PC-3 (cell line): ENCODE measurements at regions of chr18 and their contacts with region 1.

Region 1: DNA sequence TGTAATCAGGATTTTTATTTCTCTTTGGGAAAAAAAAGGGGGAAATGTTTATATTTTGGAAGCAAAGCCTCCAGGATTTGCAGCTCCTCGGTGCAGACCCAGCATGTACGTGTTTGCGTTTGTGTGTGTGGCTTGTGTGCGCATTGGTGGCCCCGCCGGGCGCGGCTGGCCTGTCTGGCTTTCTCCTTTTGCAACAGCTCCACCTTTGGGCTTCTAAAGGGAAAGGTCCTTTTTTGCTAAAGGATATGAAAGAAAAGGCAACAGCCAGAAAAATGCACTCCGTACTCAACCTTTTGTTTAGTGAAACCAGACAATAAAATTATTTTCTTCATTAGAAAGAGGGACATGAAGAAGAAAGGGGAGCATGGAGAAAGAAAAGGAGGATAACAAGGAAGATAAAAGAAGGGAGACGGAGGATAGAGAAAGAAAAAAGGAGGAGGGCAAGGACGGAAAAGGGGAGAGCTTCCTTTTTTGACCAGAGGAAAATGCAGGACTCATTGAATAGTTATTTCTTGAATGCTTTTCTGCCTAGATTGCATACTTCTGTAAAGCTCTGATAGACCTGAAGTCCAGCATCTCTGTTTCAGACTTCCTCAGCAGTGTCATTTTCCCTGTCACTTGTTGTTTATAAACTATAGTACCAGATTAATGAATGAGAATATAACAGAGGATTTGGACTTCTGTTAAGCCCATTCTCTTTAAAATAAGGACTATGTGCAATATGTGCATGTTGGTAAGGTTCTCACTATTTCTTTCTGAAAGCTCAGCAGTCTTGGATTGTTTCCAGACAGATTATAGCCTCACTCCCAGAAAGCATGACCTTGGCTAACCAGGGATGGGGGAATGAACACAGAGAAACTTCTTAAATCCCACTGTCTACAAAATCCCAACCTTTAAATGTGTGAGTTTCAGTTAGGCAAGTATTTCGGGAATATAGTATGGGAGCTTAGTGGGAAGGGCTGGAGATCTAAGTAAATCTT is 563.1 kb upstream of the PIK3C3 start:
- DNase-seq: peak; percentile 54
- ATAC-seq: peak; percentile 47
- H3K4me3 ChIP-seq: peak overlapping the region; percentile 60
- H3K27ac ChIP-seq: no peak overlapping the region
- H3K4me1 ChIP-seq: peaks cover 27% of the 10 kb centered on the region
- H3K27me3 ChIP-seq: no peaks in the 10 kb centered on the region
- CTCF ChIP-seq: peak; percentile 67

Region 2: DNA sequence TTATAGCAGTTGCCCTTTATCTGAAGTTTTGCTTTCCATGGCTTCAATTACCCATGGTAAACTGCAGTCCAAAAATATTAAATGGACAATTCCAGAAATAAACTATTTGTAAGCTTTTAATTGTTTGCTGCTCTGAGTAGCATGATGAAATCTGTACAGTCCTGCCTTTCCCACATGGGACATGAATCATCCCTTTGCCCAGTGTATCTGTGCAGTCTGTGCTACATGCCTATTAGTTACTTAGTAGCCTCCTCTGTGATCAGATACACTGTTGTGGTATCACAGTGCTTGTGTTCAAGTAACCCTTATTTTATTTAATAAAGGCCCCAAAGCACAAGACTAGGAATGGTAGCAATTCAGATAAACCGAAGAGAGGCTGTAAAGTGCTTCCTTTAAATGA is 247.5 kb before region 1 on chr18:
- CTCF ChIA-PET with region 1: no interaction called
- POLR2A ChIA-PET with region 1: no interaction called
- intact Hi-C with region 1: no loop called
- DNase-seq: no peak
- ATAC-seq: peak; percentile 31; the same call in 1 of the 2 replicates
- H3K4me3 ChIP-seq: no peak overlapping the region
- H3K27ac ChIP-seq: no peak overlapping the region
- H3K4me1 ChIP-seq: no peaks in the 10 kb centered on the region
- H3K27me3 ChIP-seq: no peaks in the 10 kb centered on the region
- CTCF ChIP-seq: no peak

Region 3: GRCh38 chr18:41461058-41461560 is 69.2 kb after region 1 on chr18:
- CTCF ChIA-PET with region 1: interaction called, 4 read pairs
- POLR2A ChIA-PET with region 1: no interaction called
- intact Hi-C with region 1: loop called (anchors 5 kb)
- DNase-seq: peak; percentile 19
- ATAC-seq: peak; percentile 51
- H3K4me3 ChIP-seq: no peak overlapping the region
- H3K27ac ChIP-seq: no peak overlapping the region
- H3K4me1 ChIP-seq: peaks cover 32% of the 10 kb centered on the region
- H3K27me3 ChIP-seq: no peaks in the 10 kb centered on the region
- CTCF ChIP-seq: no peak

Region 4: GRCh38 chr18:41532344-41533086 is 140.6 kb after region 1 on chr18:
- CTCF ChIA-PET with region 1: interaction called, 3 read pairs
- POLR2A ChIA-PET with region 1: no interaction called
- intact Hi-C with region 1: loop called (anchors 2 kb)
- DNase-seq: peak; percentile 57
- ATAC-seq: peak; percentile 74
- H3K4me3 ChIP-seq: no peak overlapping the region
- H3K27ac ChIP-seq: no peak overlapping the region
- H3K4me1 ChIP-seq: peaks cover 12% of the 10 kb centered on the region; the same call in 1 of the 2 replicates
- H3K27me3 ChIP-seq: no peaks in the 10 kb centered on the region
- CTCF ChIP-seq: peak; percentile 53

Region 5: DNA sequence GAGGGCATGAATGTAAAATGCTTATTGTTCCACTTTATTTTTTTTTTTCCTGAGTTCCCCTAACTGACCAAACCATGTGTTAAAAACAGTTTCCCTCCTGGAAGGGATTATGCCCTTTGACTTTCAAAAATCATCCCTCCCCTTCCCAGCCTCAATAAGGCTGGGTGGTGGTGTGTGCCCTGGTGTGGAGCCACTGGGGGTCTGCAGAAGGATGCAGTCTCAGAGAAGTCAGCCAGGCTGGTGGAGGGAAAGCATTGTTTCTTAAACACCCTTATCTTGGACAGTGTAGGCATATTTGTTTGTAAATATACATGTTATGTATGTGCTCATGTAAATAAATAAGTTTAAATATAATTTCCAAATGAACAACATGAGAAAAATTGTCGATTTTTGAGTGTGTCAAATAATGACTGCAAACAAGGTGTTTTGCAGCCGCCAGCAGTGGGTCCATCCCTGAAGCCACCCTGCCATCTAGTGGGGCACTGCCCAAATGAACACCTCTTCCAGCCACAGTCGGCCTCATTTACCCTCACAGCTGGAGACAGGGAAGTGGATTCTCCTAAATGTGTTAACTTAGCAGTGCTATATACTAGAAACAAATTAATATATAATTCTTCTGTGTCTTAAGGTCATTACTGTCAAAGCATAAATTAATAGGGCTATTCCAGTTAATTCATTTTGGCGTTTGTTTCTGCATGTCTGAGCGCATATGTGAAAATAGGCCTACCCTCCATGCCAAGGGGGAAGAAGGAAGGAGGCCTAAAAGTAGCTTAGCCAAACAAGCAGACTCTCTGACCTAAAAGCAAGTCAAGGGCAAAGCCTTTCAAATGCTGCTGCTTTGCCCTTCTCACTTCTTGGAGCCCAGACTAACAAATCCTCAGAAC is 353.5 kb after region 1 on chr18:
- CTCF ChIA-PET with region 1: no interaction called
- POLR2A ChIA-PET with region 1: no interaction called
- intact Hi-C with region 1: loop called (anchors 1 kb)
- DNase-seq: peak; percentile 57
- ATAC-seq: peak; percentile 93
- H3K4me3 ChIP-seq: no peak overlapping the region
- H3K27ac ChIP-seq: no peak overlapping the region
- H3K4me1 ChIP-seq: peaks cover 10% of the 10 kb centered on the region; the same call in 1 of the 2 replicates
- H3K27me3 ChIP-seq: no peaks in the 10 kb centered on the region
- CTCF ChIP-seq: peak; percentile 65